Pancreas (tissue), 10 donors: ENCODE measurements at regions of chr4 and their contacts with region 1.

Region 1: GRCh38 chr4:185608185-185608584 is 72.9 kb upstream of the PDLIM3 start:
- DNase-seq: no peak
- ATAC-seq: peak in 2 of 4 donors; percentile 37 to 39
- H3K4me3 ChIP-seq: no peak overlapping the region
- H3K27ac ChIP-seq: no peak overlapping the region
- H3K4me1 ChIP-seq: no peaks in the 10 kb centered on the region
- H3K27me3 ChIP-seq: no peaks in the 10 kb centered on the region
- CTCF ChIP-seq: no peak

Region 2: DNA sequence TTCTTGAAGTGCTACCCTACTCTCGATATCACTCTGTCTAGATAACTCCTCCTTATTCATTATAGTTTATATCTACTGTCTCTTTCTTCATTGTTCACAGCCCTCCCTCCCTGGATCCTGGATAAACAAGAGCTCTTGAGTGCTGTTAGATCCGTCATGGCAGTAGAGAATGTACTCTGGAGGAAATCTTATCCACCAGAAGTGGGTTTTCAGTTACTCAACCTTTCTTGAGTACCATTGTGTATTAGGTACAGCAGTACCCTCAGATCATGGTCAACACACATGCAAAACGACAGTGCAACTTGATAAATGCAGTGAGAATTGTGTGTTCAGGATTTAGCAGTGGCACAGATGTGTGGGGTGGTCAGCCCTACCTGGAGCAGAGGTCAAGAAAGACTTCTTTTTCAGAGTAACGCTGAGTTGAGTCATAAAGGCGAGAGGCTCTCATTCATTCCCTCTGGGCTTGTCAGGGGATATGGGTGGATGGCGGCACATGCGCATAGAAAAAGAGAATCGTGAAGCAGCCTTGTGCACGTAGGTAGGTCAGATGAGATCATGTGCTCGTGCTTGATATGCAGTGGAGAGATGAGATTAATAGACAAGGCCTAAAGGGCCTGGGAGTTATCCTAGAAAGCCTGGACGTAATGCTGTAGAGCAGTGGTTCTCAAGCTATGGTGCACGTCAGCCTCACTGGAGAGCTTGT is 309.3 kb before region 1 on chr4:
- intact Hi-C with region 1: no loop called
- DNase-seq: no peak
- ATAC-seq: no peak
- H3K4me3 ChIP-seq: no peak overlapping the region
- H3K27ac ChIP-seq: no peak overlapping the region
- H3K4me1 ChIP-seq: no peaks in the 10 kb centered on the region
- H3K27me3 ChIP-seq: no peaks in the 10 kb centered on the region
- CTCF ChIP-seq: no peak

Region 3: GRCh38 chr4:185648631-185649030 is 40.4 kb after region 1 on chr4:
- intact Hi-C with region 1: loop called in 1 of 3 experiments (anchors 5 kb)
- DNase-seq: no peak
- ATAC-seq: no peak
- H3K4me3 ChIP-seq: no peak overlapping the region
- H3K27ac ChIP-seq: peak overlapping the region in 2 of 4 donors; percentile 30 to 79
- H3K4me1 ChIP-seq: peaks cover 0 to 4% (median 0%) of the 10 kb centered on the region in 3 donors
- H3K27me3 ChIP-seq: no peaks in the 10 kb centered on the region
- CTCF ChIP-seq: no peak